ENCODE measurements at regions of chr14 and their contacts with region 1.

Region 1: DNA sequence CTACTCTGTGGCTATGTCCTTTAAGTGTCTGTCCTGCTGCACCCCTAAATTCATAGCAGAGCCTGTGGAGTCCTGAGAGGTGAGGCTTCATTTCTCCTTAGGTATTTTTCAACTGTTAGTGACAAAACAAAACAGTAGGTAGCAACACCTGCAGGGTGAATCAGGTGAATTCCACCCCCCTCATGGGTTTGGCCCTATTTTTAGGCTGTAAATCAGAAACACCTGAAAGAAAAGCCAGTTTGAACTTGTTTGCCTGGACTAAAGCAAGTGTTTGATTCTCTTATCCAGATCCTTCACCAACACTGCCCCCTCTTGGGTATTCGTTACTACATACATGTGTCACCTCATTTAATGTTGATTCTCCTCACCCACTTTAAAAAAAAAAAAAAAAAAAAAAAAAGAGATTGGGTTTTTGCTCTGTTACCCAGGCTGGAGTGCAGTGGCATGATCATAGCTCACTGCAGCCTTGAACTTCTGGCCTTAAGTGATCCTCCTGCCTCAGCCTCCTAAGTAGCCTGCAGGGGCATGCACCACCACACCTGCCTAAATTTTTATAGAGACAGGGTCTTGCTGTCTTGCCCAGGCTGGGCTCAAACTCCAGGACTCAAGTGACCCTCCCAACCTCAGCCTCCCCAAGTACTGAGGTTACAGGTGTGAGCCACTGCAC is 10.3 kb downstream of the TBPL2 start:
- DNase-seq: peak in 1 of 3 donors; percentile 87
- ATAC-seq: peak; percentile 89
- H3K4me3 ChIP-seq: no peak overlapping the region
- H3K4me1 ChIP-seq: peaks cover 14% of the 10 kb centered on the region
- CTCF ChIP-seq: no peak

Region 2: GRCh38 chr14:54857830-54858269 is 572.3 kb before region 1 on chr14:
- intact Hi-C with region 1: no loop called
- DNase-seq: no peak
- ATAC-seq: peak; percentile 47
- H3K4me3 ChIP-seq: no peak overlapping the region
- H3K4me1 ChIP-seq: no peaks in the 10 kb centered on the region
- CTCF ChIP-seq: no peak

Region 3: DNA sequence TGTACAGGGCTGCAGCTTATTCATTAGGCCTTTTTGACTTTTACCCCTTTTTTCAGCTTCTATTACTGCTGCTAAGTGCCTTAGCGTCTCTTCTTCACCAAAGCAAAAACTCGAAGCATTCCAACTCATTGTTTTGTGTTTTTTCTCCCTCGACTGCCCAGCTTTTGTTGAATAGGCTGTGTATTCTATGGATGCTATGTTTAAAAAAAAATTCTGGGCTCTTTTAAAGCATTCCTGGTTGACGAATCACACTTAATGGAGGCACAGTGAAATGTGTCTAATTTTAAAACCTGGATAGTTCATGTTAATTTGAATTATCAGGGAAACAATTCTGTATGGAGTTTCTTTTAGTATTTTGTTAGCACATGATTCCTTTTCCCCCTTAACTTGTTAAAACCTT is 179.5 kb after region 1 on chr14:
- intact Hi-C with region 1: loop called in 1 of 2 experiments (anchors 10 kb)
- DNase-seq: no peak
- ATAC-seq: no peak
- H3K4me3 ChIP-seq: no peak overlapping the region
- H3K4me1 ChIP-seq: peaks cover 16% of the 10 kb centered on the region
- CTCF ChIP-seq: no peak

Measured in mucosa of descending colon (tissue), 3 donors.